Esophagus muscularis mucosa (tissue), 4 donors: ENCODE measurements at regions of chr9 and their contacts with region 1.

Region 1: DNA sequence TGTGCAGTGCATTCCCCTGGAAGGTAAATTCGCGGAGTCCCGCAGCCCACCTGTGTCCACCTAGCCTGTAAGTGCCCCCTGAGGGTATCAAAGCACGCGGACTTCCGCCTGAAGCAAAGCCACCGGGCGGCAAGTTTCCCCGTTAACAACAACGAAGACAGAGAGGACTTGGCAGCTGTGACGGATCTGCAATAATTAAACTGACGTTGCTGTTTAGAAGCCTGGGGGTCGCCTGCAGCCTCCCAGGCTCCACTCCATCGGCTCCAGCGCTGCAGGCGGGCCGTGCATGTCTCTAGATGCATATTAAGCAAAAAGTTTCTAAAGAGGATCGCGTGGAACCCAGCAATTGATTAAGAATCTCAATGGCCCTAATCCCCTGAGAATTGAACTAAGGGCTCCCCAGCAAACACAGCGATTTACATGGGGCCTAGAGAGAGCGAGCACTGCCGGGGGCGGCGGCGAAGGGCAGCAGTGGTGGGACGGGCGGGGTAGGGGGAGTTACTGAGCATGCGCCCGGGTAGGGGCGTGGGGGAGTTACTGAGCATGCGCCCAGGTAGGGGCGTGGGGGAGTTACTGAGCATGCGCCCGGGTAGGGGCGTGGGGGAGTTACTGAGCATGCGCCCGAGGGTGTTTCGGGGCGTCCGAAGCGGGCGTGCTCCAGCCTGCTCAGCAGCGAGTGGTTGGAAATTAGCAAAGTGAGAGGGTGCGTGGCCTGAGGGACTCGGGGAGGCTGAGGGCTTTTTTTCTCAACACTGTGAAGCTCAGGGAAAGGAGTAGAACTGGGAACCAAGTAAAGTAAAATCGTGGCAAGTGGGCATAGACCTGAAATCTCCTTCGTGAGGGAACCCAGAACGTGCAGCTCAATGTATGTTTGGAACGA is 255.2 kb downstream of the DOCK8 start:
- DNase-seq: peak; percentile 96
- H3K4me3 ChIP-seq: peak overlapping the region; percentile 62 to 73 (median 64)
- H3K27ac ChIP-seq: peak overlapping the region; percentile 58 to 83 (median 74)
- H3K4me1 ChIP-seq: peaks cover 10 to 25% (median 21%) of the 10 kb centered on the region in 4 donors
- H3K27me3 ChIP-seq: no peaks in the 10 kb centered on the region
- CTCF ChIP-seq: no peak
- EP300 ChIP-seq: no peak
- POLR2A ChIP-seq: no peak

Region 2: GRCh38 chr9:503881-504852 is 34.3 kb after region 1 on chr9:
- intact Hi-C with region 1: loop called (anchors 5 kb)
- DNase-seq: no peak
- H3K4me3 ChIP-seq: peak within 1 kb of the TSS; percentile 75 to 87 (median 82)
- H3K27ac ChIP-seq: peak within 1 kb of the TSS; percentile 82 to 88 (median 86)
- H3K4me1 ChIP-seq: peaks cover 8 to 30% (median 24%) of the 10 kb centered on the region in 4 donors
- H3K27me3 ChIP-seq: no peaks in the 10 kb centered on the region
- CTCF ChIP-seq: peak; percentile 35 to 55 (median 36)
- EP300 ChIP-seq: no peak
- POLR2A ChIP-seq: no peak